HAP-1 (cell line): ENCODE measurements at regions of chr16 and their contacts with region 1.

Region 1: GRCh38 chr16:82263521-82264143 is 93.6 kb upstream of the MPHOSPH6 start:
- DNase-seq: peak; percentile 17 to 69
- H3K4me3 ChIP-seq: no peak overlapping the region
- H3K4me1 ChIP-seq: no peaks in the 10 kb centered on the region
- H3K27me3 ChIP-seq: peaks cover 6% of the 10 kb centered on the region

Region 2: DNA sequence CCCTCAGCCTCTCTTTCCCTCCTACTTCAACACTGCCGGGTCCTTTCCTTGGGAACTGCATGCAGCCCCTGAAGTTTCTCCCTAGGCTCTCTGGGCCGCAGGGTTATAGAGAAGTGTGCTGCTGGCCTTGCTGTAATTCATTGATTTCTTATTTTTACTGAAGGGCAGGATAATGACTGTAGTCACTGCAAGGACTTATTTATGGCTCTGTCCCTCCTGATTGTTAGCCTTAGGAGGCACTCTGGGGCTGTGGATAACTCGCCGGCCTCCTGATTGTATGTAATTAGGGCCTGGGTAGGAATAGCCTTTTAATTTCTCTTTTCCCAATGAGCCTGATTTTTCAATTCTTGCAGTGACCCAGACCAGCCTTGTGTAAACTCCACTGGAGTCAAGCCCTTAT is 224.8 kb after region 1 on chr16:
- in situ Hi-C with region 1: no loop called
- DNase-seq: no peak
- H3K4me3 ChIP-seq: no peak overlapping the region
- H3K4me1 ChIP-seq: no peaks in the 10 kb centered on the region
- H3K27me3 ChIP-seq: peaks cover 10% of the 10 kb centered on the region

Region 3: GRCh38 chr16:82639666-82640336 is 376.2 kb after region 1 on chr16:
- in situ Hi-C with region 1: loop called (anchors 10 kb)
- DNase-seq: peak; percentile 70 to 85
- H3K4me3 ChIP-seq: no peak overlapping the region
- H3K4me1 ChIP-seq: peaks cover 25% of the 10 kb centered on the region
- H3K27me3 ChIP-seq: no peaks in the 10 kb centered on the region